Heart left ventricle (tissue), 16 donors: ENCODE measurements at regions of chr22 and their contacts with region 1.

Region 1: GRCh38 chr22:26450453-26451185 is 21.6 kb downstream of the ASPHD2 start:
- DNase-seq: no peak
- ATAC-seq: no peak
- H3K4me3 ChIP-seq: no peak overlapping the region
- H3K27ac ChIP-seq: no peak overlapping the region
- H3K4me1 ChIP-seq: peaks cover 0 to 8% (median 0%) of the 10 kb centered on the region in 12 donors
- H3K27me3 ChIP-seq: no peaks in the 10 kb centered on the region
- CTCF ChIP-seq: no peak
- POLR2A ChIP-seq: no peak

Region 2: DNA sequence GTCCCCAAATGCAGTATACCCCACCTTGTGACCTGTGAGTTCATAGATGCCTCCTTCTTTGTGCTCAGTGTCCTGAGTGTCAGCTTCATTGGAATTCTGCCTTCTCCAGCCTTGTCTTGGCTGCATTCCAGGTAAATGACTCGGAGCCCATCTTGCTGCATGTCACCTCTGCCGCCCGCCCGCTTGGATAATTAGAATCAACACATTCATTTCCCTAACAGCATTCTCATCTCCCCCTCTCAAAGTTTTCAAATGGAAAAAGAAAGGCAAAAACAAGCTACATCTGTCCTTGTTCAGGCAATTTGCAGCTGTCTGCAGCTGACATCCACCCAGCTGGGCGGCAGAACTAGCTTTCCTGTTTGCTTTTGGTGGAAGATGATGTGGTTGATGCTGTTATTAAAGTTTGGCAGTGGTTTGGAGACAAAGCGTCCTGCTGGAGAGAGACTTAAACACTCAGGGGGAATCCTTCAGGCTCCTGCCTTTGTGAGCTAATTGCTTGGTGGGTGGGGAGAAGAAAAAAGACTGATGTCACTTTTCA is 480.2 kb before region 1 on chr22:
- intact Hi-C with region 1: no loop called
- DNase-seq: peak in 4 of 5 donors; percentile 37 to 65 (median 52)
- ATAC-seq: peak; percentile 54 to 71 (median 64)
- H3K4me3 ChIP-seq: no peak overlapping the region
- H3K27ac ChIP-seq: peak overlapping the region in 7 of 12 donors; percentile 28 to 79 (median 60)
- H3K4me1 ChIP-seq: peaks cover 0 to 31% (median 9%) of the 10 kb centered on the region in 12 donors
- H3K27me3 ChIP-seq: no peaks in the 10 kb centered on the region
- CTCF ChIP-seq: no peak
- POLR2A ChIP-seq: no peak

Region 3: DNA sequence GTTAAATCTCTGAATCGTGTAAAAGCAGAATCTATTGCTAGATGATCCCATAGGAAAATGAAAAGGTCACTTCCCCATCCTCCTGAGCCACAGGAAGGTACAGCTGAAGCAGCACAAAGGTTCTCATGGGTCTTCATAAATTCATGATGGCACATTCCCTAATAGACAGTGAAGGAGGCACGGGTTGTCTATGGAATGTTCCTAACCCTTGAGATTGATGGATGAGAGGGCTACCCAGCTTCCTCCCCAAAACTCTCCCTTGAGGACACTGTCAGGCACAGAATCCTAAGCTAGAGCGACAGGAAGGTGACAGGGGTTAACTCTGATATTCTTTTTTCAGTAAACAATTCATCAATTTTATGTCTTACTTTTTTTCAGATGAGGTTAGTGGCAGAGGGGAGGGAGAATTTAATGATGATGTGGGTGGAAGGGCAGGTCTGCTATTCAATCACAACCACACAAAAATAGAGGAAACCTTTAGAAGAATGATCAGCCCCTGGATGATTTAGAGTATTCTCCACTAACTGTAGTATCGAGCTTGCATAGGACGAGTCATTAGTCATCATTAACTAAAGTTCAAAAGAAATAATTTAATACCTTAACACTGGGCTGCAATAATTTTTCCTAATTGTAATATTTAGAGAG is 248.2 kb before region 1 on chr22:
- intact Hi-C with region 1: no loop called
- DNase-seq: no peak
- ATAC-seq: no peak
- H3K4me3 ChIP-seq: no peak overlapping the region
- H3K27ac ChIP-seq: no peak overlapping the region
- H3K4me1 ChIP-seq: no peaks in the 10 kb centered on the region
- H3K27me3 ChIP-seq: peaks cover 0 to 12% (median 0%) of the 10 kb centered on the region in 9 donors
- CTCF ChIP-seq: no peak
- POLR2A ChIP-seq: no peak

Region 4: DNA sequence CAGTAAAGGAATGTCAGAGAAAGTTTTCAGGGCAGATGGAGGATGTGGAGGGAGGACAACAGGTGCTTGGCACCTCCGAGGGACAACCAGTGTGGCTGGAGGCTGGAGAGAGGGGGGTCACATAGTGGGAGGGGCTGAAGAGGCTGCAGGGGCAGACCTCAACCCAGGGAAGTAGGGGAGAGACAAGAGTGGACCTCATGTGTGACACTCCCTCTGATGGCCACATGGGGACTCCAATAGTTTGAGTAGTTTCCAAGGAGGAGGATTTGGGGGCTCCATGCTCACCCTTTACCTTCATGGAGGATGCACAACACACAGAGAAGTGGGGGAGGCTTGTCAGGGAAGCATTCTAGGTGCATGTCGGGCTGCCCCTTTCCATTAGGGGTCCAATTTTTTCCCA is 56.7 kb before region 1 on chr22:
- intact Hi-C with region 1: no loop called
- DNase-seq: no peak
- ATAC-seq: no peak
- H3K4me3 ChIP-seq: no peak overlapping the region
- H3K27ac ChIP-seq: no peak overlapping the region
- H3K4me1 ChIP-seq: no peaks in the 10 kb centered on the region
- H3K27me3 ChIP-seq: peaks cover 0 to 15% (median 0%) of the 10 kb centered on the region in 9 donors
- CTCF ChIP-seq: no peak
- POLR2A ChIP-seq: no peak

Region 5: DNA sequence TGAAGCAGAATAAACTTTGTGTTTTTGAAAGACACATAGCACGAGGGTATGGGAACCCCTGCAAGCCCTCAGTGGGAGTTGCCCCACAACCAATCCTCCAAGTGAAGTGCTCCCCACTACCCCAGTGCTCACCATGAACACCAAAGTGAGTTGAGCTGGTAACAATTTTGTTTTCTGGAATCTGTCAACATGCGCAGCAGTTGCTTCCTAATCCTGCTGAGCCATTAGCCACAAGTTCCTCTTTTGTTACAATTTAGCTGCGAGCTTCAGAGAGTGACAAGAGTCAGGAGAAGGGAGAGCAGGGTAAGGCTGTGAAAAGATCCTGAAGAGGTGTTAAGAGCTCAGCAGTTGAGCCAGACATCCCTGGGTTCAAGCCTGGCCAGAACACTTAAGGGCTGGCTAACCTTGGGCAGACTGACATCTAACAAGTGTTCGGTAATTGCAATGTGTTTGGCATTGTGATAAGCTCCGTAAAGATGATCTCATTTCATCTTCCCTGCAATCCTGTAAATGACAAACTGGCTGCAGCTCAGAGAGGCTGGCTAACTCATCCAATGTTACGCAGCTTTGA is 45.7 kb before region 1 on chr22:
- intact Hi-C with region 1: loop called in 1 of 10 experiments (anchors 10 kb)
- DNase-seq: no peak
- ATAC-seq: peak in 3 of 4 donors; percentile 28 to 67 (median 32)
- H3K4me3 ChIP-seq: no peak overlapping the region
- H3K27ac ChIP-seq: no peak overlapping the region
- H3K4me1 ChIP-seq: peaks cover 0 to 12% (median 0%) of the 10 kb centered on the region in 12 donors
- H3K27me3 ChIP-seq: peaks cover 0 to 33% (median 5%) of the 10 kb centered on the region in 9 donors
- CTCF ChIP-seq: no peak
- POLR2A ChIP-seq: no peak